ENCODE measurements at regions of chr2 and their contacts with region 1.

Region 1: DNA sequence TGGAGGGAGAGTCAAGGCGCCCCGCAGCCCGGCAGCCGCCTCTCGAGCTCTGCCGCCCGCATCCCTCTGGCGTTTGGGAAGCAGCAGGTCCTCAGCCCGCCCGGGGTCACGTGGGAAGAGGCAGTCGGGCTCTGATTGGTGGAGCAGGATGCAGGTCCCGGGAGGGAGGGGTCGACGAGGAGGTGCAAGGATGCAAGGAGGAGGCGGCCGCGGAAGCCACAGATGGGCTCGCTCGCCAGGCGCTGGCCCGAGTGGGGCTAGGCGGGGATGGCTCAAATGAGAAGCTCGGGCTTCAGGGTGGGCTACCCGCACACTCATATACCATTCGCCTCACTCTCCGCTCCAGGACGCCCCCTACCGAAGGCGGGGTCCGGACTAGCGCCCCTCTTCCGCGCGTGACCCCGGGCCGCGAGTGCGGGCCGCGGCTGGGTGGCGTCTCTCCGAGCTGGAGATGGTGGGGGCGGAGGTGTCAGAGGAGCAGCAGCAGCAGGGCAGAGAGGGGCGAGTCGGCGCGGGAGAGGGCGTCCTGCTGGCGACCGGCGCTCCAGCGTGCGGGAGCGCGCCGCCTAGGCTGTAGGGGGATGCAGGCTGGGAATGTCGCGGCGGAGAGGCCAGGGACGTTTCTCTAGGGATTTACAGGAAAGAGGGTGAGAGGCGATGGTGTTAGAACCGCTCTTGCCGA is at the start of gene TMEFF2:
- DNase-seq: peak; percentile 66
- H3K4me3 ChIP-seq: peak within 1 kb of the TSS; percentile 77
- H3K27ac ChIP-seq: no peak within 1 kb of the TSS
- H3K27me3 ChIP-seq: peaks cover 3% of the 10 kb centered on the region
- CTCF ChIP-seq: peak; percentile 47
- polyA plus RNA-seq, gene TMEFF2: 3.4 and 4.1 TPM in 2 replicates

Region 2: DNA sequence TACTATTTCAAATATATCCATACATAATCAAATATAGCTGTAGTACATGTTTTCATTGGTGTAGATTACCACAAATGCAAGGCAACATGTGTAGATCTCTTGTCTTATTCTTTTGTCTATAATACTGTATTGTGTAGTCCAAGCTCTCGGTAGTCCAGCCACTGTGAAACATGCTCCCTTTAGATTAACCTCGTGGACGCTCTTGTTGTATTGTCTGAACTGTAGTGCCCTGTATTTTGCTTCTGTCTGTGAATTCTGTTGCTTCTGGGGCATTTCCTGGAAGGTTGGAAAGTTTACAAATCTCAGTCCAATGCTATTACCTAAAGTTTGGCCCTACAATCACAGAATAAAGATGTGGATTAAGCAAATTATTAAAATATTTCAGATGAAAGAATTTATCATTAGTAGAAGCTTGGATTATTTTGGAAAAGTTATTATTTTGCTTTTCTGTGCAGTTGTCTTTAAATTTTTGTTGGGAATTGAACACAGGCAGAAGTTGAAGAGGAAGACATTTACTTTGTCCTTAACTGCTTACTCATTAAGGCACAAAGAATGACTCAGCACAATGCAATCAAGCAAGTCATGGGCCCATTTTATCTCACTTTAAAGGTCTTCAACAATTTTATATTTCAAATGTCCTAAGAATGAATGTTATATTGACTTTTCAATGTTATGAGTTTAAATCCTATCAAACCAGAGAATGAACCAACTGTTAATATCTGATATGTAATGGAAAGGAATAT is 244.7 kb before region 1 on chr2:
- CTCF ChIA-PET with region 1: no interaction called
- POLR2A ChIA-PET with region 1: no interaction called
- DNase-seq: no peak
- H3K4me3 ChIP-seq: no peak overlapping the region
- H3K27ac ChIP-seq: no peak overlapping the region
- H3K27me3 ChIP-seq: no peaks in the 10 kb centered on the region
- CTCF ChIP-seq: no peak

Region 3: GRCh38 chr2:192286093-192286701 is 91.2 kb after region 1 on chr2:
- CTCF ChIA-PET with region 1: interaction called, 25 read pairs
- POLR2A ChIA-PET with region 1: no interaction called
- DNase-seq: peak; percentile 23
- H3K4me3 ChIP-seq: no peak overlapping the region
- H3K27ac ChIP-seq: no peak overlapping the region
- H3K27me3 ChIP-seq: no peaks in the 10 kb centered on the region
- CTCF ChIP-seq: peak; percentile 72

Measured in AG04450 (cell line).